Posterior cingulate gyrus (tissue), 11 donors: ENCODE measurements at regions of chr12 and their contacts with region 1.

Region 1: GRCh38 chr12:72017054-72017651 is 78.5 kb downstream of the TPH2 start:
- DNase-seq: peak; percentile 51 to 96 (median 78)

Region 2: DNA sequence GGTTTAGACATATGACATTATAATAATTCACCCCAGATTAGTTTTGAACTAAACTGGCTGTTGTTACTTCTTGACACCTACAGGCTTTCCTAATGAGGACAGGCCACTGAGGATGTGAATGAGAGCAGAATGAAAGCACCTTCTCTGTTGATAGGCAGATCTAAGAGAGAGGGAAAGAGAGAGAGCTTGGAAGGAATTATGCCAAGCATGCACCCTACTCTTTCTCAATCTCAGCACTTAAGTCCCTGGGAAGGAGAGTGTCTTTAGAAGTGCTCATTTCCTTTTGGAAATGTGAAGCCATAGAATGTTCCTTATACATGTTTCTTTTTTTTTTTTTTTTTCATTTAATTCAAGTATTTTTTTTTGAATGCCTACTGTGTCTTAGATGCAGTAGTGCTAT is 128.6 kb before region 1 on chr12:
- intact Hi-C with region 1: no loop called
- DNase-seq: no peak

Region 3: DNA sequence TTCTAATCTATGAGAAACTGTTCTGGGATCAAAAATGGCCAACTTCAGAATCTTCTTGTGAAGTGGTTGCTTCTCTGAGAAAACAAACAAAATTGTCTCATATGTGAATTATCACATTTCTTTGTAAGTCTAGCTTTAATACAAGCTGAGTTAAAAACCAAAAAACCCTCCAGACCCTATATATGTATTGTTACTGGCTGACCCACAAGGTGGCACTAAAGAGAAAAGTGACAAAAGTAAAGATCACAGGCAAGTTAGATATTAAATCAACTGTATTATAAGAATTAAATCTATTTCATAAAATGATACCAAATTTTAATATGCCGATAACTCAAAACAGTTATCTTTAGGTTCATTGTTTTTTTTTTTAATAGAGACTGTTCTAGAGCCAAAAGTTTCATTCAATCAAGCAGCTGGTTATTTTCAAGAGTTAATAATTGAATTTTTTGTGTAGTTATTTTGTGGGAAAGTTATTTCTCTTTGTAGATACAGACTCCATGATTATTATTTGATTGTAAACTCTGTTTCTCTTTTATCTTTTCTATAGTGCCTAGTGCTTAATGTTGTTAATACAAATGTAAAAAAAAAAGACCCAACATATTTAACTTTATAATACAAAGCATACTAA is 247.5 kb after region 1 on chr12:
- intact Hi-C with region 1: loop called (anchors 5 kb)
- DNase-seq: no peak

Region 4: GRCh38 chr12:72282721-72283120 is 265.6 kb after region 1 on chr12:
- intact Hi-C with region 1: loop called (anchors 1 kb)
- DNase-seq: no peak